H1 (cell line): ENCODE measurements at regions of chr5 and their contacts with region 1.

Region 1: DNA sequence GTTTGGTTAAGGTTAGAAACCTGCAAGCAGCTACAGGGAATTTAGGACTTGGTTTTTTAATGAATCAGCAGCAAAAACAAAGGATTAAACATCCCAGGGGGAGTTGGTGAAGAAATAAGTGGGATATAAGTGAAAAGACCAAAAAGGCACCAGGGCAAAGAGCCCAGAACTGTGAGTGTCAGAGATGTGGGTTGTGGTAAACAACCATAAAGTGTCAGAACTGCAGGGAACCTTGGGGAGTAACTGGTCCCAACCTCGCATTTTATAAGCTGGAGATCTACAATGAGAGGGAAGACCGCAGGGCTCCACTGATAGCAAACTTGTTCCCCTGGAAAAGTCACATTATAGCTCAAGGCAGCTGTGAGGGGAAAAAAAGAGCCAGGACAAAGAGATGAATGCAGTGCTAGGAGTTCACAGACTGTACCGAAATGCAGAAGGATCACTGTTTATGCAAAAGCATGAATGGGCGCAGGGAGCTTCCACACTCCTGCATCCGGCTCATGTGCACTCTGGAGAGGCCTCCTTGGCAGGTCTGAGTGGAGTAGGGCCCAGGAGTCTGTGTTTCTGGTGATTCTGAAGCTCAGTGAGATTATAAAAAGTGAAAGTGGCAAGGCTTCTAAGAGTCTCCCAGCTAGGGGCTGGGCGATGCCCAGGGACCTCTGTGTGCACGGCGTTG is 156.3 kb downstream of the GOLPH3 start:
- DNase-seq: no peak
- H3K4me3 ChIP-seq: no peak overlapping the region
- H3K27ac ChIP-seq: no peak overlapping the region
- H3K4me1 ChIP-seq: peaks cover 7 to 31% (median 22%) of the 10 kb centered on the region in 4 experiments
- H3K27me3 ChIP-seq: no peaks in the 10 kb centered on the region
- CTCF ChIP-seq: no peak
- EP300 ChIP-seq: no peak
- POLR2A ChIP-seq: no peak
- RAD21 ChIP-seq: no peak

Region 2: GRCh38 chr5:31880449-31880848 is 137.4 kb before region 1 on chr5:
- CTCF ChIA-PET with region 1: no interaction called
- POLR2A ChIA-PET with region 1: no interaction called
- DNase-seq: no peak
- H3K4me3 ChIP-seq: no peak overlapping the region
- H3K27ac ChIP-seq: no peak overlapping the region
- H3K4me1 ChIP-seq: no peaks in the 10 kb centered on the region
- H3K27me3 ChIP-seq: no peaks in the 10 kb centered on the region
- CTCF ChIP-seq: no peak
- EP300 ChIP-seq: no peak
- POLR2A ChIP-seq: no peak
- RAD21 ChIP-seq: no peak

Region 3: DNA sequence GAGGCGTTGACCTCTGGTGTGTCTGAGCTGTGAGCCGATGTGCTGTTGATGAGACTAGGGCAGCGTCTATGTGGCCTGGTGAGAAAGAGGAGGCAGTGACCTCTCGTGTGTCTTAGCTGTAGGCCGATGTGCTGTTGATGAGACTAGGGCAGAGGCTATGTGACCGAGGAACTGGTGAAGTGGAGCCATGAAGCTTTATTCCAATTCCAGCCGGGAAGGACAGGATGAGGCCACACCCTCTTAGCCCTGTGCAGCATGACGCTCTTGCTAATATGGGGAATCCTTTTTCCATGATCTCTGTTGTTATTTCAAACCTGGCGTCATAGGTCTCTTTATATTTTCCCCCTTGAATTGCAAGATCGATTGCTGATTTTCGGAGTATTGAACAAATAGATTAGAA is 16.1 kb before region 1 on chr5:
- CTCF ChIA-PET with region 1: interaction called, 10 read pairs
- POLR2A ChIA-PET with region 1: no interaction called
- DNase-seq: no peak
- H3K4me3 ChIP-seq: no peak overlapping the region
- H3K27ac ChIP-seq: no peak overlapping the region; the same call in 1 of the 2 replicates
- H3K4me1 ChIP-seq: peaks cover 0 to 4% (median 0%) of the 10 kb centered on the region in 4 experiments; a peak in 3 of 7 replicates
- H3K27me3 ChIP-seq: no peaks in the 10 kb centered on the region
- CTCF ChIP-seq: no peak
- EP300 ChIP-seq: no peak
- POLR2A ChIP-seq: no peak
- RAD21 ChIP-seq: no peak

Region 4: DNA sequence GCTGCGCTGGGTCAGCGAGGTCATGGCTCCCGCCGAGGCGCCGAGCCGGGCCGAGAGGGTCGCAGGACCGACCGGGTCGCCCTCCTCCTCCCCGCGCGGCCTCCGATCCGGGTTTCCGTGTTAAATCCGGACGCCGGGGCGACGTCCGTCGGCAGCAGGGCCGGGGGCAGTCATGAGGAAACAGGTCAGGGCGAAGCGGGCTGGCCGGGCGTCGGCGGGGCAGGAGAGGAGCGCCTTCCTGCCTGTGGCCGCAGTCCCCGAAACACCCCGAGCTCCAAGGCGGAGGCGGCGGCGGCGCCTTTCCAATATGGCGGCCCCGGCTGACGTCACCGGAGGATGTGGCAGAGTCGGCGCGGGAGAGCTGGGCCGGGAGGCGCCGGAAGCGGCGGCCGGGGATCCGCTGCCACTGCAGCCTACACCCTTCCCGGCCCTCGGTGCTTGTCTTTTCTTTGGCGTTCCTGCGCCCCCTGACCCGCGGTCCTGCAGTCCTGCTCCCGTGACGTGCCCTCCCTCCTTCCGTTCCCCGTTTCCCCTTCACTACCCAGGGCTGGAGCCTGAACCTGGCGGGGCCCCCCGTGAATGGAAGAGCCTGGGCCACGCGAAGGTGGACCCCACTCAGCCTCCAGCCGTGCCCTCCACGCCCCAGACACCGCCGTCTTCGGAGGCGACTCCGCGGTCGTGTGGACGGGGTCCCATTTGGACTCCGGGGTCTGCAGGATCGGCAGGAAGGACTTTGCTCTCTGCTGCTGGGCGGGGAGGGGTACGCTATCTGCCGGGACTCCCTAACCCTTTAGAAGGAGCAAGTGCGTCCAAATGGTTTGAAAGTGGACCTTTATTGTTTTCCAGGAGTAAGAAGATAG is 156.4 kb after region 1 on chr5 and contains the start of gene GOLPH3:
- CTCF ChIA-PET with region 1: no interaction called
- POLR2A ChIA-PET with region 1: no interaction called
- DNase-seq: peak; percentile 62 to 97
- H3K4me3 ChIP-seq: peak within 1 kb of the TSS; percentile 83 to 88 (median 84)
- H3K27ac ChIP-seq: peak within 1 kb of the TSS; percentile 99
- H3K4me1 ChIP-seq: no peaks in the 10 kb centered on the region
- H3K27me3 ChIP-seq: no peaks in the 10 kb centered on the region
- CTCF ChIP-seq: peak in 2 of 3 experiments; percentile 2 to 7; a peak in 2 of 4 replicates
- EP300 ChIP-seq: no peak; a peak in 1 of 3 replicates
- POLR2A ChIP-seq: peak; percentile 90 to 98
- RAD21 ChIP-seq: no peak
- total RNA-seq, gene GOLPH3: 86.1 and 93.6 TPM in 2 replicates